ENCODE measurements at regions of chr2 and their contacts with region 1.

Region 1: GRCh38 chr2:193482557-193482956 is 1287.8 kb upstream of the TMEFF2 start:
- DNase-seq: no peak
- H3K4me3 ChIP-seq: no peak overlapping the region
- H3K4me3 Mint-ChIP-seq: peak overlapping the region in 4 of 7 donors; percentile 10 to 61 (median 34)
- H3K27ac ChIP-seq: no peak overlapping the region
- H3K27ac Mint-ChIP-seq: no peak overlapping the region
- H3K4me1 ChIP-seq: no peaks in the 10 kb centered on the region
- H3K4me1 Mint-ChIP-seq: peaks cover 0 to 5% (median 4%) of the 10 kb centered on the region in 3 donors
- H3K27me3 ChIP-seq: no peaks in the 10 kb centered on the region
- H3K27me3 Mint-ChIP-seq: no peaks in the 10 kb centered on the region

Region 2: DNA sequence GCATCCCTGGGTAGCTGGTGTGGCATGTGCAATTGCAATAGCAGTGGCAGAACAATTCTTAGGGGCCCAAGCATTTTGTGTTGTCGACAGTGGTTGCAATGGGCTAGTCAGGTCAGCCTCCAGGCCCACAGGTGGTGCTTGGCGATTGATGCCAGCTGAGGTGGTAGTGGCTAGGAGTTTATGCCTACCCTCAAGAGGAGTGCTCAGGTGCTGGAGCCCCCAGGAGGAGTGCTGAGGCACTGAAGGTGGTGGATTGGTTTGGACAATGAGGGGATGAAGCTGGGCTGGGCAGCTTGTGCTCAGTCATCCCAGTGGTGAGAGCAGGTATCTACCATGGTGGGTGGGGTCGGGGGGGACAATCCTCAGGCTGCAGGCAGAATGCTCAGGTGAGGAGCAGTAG is 409.9 kb before region 1 on chr2:
- CTCF ChIA-PET with region 1: no interaction called
- POLR2A ChIA-PET with region 1: no interaction called
- DNase-seq: no peak
- H3K4me3 ChIP-seq: no peak overlapping the region
- H3K4me3 Mint-ChIP-seq: no peak overlapping the region
- H3K27ac ChIP-seq: no peak overlapping the region
- H3K27ac Mint-ChIP-seq: no peak overlapping the region
- H3K4me1 ChIP-seq: no peaks in the 10 kb centered on the region
- H3K4me1 Mint-ChIP-seq: no peaks in the 10 kb centered on the region
- H3K27me3 ChIP-seq: no peaks in the 10 kb centered on the region
- H3K27me3 Mint-ChIP-seq: no peaks in the 10 kb centered on the region

Region 3: GRCh38 chr2:193428336-193428818 is 54.2 kb before region 1 on chr2:
- CTCF ChIA-PET with region 1: no interaction called
- POLR2A ChIA-PET with region 1: interaction called, 10 read pairs
- DNase-seq: no peak
- H3K4me3 ChIP-seq: no peak overlapping the region
- H3K4me3 Mint-ChIP-seq: no peak overlapping the region
- H3K27ac ChIP-seq: no peak overlapping the region
- H3K27ac Mint-ChIP-seq: no peak overlapping the region
- H3K4me1 ChIP-seq: no peaks in the 10 kb centered on the region
- H3K4me1 Mint-ChIP-seq: no peaks in the 10 kb centered on the region
- H3K27me3 ChIP-seq: no peaks in the 10 kb centered on the region
- H3K27me3 Mint-ChIP-seq: no peaks in the 10 kb centered on the region

Region 4: GRCh38 chr2:193502363-193503035 is 19.9 kb after region 1 on chr2:
- CTCF ChIA-PET with region 1: no interaction called
- POLR2A ChIA-PET with region 1: no interaction called
- DNase-seq: no peak
- H3K4me3 ChIP-seq: no peak overlapping the region
- H3K4me3 Mint-ChIP-seq: peak overlapping the region in 1 of 7 donors; percentile 71
- H3K27ac ChIP-seq: no peak overlapping the region
- H3K27ac Mint-ChIP-seq: no peak overlapping the region
- H3K4me1 ChIP-seq: no peaks in the 10 kb centered on the region
- H3K4me1 Mint-ChIP-seq: no peaks in the 10 kb centered on the region
- H3K27me3 ChIP-seq: no peaks in the 10 kb centered on the region
- H3K27me3 Mint-ChIP-seq: no peaks in the 10 kb centered on the region

Region 5: DNA sequence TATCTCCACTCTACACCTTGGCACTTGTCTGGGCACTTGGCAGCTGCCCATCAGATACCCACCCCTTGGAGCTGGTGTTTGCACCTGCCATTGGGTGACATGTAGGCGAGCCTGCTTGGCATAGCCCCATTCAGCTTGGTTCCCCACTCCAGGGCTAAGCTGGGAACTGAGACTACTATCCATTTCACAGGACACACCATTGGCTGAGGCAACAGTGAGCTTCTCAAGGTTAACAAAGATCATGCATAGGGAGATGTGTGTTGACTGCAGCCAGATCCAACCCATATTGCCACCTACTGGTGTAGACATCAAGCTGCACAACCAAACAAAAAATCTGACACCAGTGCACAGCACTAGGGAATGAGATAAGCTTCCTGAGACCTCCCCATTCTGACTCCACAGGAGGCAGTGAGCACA is 102.0 kb after region 1 on chr2:
- CTCF ChIA-PET with region 1: no interaction called
- POLR2A ChIA-PET with region 1: no interaction called
- DNase-seq: no peak
- H3K4me3 ChIP-seq: no peak overlapping the region
- H3K4me3 Mint-ChIP-seq: no peak overlapping the region
- H3K27ac ChIP-seq: no peak overlapping the region
- H3K27ac Mint-ChIP-seq: no peak overlapping the region
- H3K4me1 ChIP-seq: no peaks in the 10 kb centered on the region
- H3K4me1 Mint-ChIP-seq: no peaks in the 10 kb centered on the region
- H3K27me3 ChIP-seq: no peaks in the 10 kb centered on the region
- H3K27me3 Mint-ChIP-seq: no peaks in the 10 kb centered on the region

Measured in CD8-positive, alpha-beta memory T cell (primary cell).